Motor neuron (in vitro differentiated cells): ENCODE measurements at regions of chr5 and their contacts with region 1.

Region 1: DNA sequence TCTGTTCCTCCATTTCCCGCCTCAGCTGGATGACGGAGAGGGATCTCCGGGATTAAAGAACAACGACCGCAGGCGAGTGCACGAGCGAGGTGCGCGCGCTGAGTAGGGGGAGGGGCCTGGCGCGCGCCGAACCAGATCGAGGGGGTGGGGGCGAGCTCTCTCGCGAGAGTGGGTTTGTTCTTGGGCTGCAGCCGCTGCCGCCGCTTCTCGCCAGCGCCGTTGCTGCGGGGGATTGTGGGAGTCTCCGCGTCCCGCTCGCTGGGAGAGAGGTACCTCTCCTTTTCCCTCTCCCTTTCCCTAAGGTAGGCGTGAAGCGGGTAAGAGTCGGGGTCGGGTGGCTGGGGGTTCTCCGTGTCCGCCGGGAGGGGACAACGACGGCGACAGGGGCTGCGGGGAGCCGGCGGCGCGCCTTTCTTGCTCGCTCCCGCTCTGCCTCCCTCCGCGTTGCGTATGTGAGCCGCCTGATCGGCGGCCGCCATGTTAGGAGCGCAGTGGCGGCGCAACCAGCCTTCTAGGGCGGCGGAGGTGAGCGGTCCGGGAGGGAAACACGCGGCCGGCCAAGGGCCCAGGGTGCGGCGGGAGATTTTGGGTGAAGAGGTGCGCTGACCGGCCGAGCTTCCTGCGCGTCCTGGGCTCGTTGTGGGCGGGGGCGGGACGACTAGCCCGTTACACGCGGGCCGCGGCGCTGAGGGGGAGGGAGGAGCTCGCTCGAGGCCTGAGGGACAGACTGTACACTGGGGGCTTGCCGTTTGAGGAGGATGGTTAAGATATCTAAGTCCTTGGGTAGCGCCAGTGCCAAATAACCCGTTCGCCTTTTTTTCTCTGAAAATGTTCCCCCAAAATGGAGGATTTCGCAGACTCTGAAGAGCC is at the start of gene MATR3:
- ATAC-seq: peak; percentile 75 to 89 (median 87)
- H3K4me3 ChIP-seq: peak within 1 kb of the TSS; percentile 82 to 99 (median 91)
- H3K27ac ChIP-seq: peak within 1 kb of the TSS; percentile 99 to 100
- H3K4me1 ChIP-seq: peaks cover 24 to 30% of the 10 kb centered on the region in 2 donors
- total RNA-seq, gene MATR3: 180 to 596 (median 433) TPM

Region 2: DNA sequence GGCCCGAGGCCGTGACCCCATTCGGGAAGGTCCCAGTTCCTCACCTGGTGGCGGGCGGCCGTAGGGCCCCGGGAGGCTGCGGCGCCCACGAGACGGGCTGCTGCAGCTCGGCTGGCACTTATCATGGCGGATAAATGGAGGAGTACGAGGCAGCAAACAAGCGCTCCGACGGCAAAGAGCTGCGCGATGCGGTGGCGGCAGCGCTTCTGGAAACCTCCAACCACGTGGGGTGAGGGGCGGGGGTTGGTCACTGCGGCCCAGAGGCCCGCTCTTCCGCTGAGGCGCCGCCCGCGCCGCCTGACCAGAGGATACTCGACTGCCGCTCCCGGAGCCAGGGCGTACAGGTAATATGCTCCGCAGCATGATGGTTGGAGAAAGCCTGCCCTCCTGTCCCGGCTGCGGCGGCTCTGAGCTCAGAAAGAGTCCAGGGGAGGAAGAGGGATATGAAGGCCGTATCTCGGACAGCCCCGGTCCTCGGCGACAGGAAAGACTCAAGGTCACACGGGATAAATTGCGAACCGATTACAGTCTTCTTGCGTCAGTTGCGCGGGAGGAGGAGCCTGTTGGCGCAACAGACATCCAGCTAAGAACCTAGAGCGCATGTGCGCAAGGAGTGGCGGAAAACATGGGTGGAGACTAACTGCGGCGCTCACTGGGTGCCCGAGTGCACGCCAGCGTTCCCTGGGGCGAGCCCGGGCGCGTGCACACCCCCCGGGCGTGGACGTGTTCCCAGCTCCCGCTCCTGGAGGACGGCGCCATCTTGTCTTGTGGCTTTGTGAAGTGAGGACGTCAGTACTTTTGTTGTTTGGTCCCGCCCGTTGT is 718.3 kb before region 1 on chr5 and contains the start of gene HSPA9:
- in situ Hi-C with region 1: loop called in 1 of 9 experiments (anchors 25 kb)
- ATAC-seq: peak; percentile 83 to 93 (median 92)
- H3K4me3 ChIP-seq: peak within 1 kb of the TSS; percentile 87 to 99 (median 92)
- H3K27ac ChIP-seq: peak within 1 kb of the TSS; percentile 100
- H3K4me1 ChIP-seq: peaks cover 11 to 17% of the 10 kb centered on the region in 2 donors
- total RNA-seq, gene HSPA9: 195 to 371 (median 307) TPM